Right ventricle myocardium inferior (tissue), 1 donor: ENCODE measurements at regions of chr12 and their contacts with region 1.

Region 1: GRCh38 chr12:132489602-132490239 is at the start of gene FBRSL1:
- DNase-seq: peak; percentile 97
- ATAC-seq: peak; percentile 89
- total RNA-seq, gene FBRSL1: 51.9 TPM

Region 2: GRCh38 chr12:132449565-132450417 is 39.9 kb before region 1 on chr12:
- intact Hi-C with region 1: no loop called
- DNase-seq: peak; percentile 50
- ATAC-seq: no peak

Region 3: DNA sequence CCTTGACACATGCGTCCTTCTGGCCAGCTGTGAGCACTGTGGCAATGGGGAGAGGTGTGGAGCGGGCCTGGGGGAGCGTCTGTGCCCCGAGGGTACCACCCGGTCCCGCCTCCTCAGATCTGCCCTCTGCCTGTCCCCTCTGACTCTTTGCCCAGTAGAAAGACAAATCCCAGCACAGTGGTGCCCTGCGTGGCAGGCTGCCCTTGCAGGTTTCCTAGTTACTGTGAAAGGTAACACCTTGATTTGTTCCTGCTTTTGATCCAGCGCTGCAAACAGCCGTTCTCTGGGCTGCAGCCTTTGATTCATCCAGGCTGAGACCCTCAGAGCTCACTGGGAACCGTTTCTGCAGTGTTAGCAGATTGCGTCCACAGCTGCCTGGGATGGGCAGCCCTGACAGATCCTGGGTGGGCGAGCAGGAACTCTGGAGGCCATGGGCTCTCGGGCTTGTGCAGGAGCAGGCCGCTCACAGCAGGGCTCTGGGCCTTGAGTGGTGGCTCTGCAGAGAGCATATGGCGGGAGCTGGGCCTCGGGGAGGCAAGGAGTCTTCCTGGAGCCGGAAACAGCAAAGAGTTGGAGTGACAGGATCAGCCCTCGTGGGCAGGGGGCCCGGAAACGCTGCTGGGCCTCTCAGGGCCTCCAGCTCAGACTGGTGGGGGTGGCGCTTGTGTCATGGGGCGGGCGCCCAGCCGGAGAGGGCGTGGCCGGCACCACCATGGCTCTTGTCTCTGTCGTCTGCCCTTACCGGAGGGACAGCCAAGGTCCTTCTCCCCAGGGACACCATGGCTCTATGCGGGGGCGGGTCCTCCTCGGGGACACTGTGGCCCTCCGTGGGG is 16.8 kb after region 1 on chr12:
- intact Hi-C with region 1: loop called (anchors 2 kb)
- DNase-seq: peak; percentile 94
- ATAC-seq: peak; percentile 89